ENCODE measurements at regions of chrX and their contacts with region 1.

Region 1: DNA sequence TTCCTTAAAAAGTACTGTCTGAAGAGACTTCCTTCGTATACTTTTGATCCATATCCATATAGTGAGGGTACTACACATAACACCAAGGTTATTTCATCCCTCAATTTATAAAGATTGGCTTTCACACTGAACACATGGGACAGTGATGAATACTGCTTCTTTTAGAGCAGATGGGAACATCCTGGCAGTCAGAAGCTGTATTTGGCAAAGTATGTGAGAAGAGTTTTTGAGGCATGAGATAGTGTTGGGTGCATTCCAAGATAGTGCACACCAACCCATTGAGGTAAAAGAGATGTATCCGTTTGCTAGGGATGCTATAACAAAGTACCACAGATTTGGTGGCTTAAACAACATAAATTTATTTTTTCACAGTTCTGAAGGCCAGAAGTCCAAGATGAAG is 141.1 kb downstream of the MOSPD2 start:
- DNase-seq: no peak
- ATAC-seq: no peak
- H3K4me3 ChIP-seq: no peak overlapping the region
- H3K27ac ChIP-seq: no peak overlapping the region
- H3K4me1 ChIP-seq: no peaks in the 10 kb centered on the region
- H3K27me3 ChIP-seq: no peaks in the 10 kb centered on the region
- CTCF ChIP-seq: no peak
- EP300 ChIP-seq: no peak
- POLR2A ChIP-seq: no peak
- RAD21 ChIP-seq: no peak

Region 2: GRCh38 chrX:15059474-15059873 is 45.2 kb after region 1 on chrX:
- CTCF ChIA-PET with region 1: no interaction called
- POLR2A ChIA-PET with region 1: no interaction called
- in situ Hi-C with region 1: no loop called
- intact Hi-C with region 1: loop called (anchors 10 kb)
- DNase-seq: no peak
- ATAC-seq: no peak
- H3K4me3 ChIP-seq: no peak overlapping the region
- H3K27ac ChIP-seq: no peak overlapping the region
- H3K4me1 ChIP-seq: no peaks in the 10 kb centered on the region
- H3K27me3 ChIP-seq: no peaks in the 10 kb centered on the region
- CTCF ChIP-seq: no peak
- EP300 ChIP-seq: no peak
- POLR2A ChIP-seq: no peak
- RAD21 ChIP-seq: 0 out of 4 replicates have a peak, but pooled peaks of 1 of the 2 experiments have one; percentile 3

Measured in K562 (cell line).